ENCODE measurements at regions of chr14 and their contacts with region 1.

Region 1: GRCh38 chr14:30874999-30875787 is 834 bp downstream of the COCH start:
- DNase-seq: no peak

Region 2: GRCh38 chr14:30656190-30656632 is 219.0 kb before region 1 on chr14:
- in situ Hi-C with region 1: loop called (anchors 25 kb)
- DNase-seq: peak; percentile 42

Region 3: DNA sequence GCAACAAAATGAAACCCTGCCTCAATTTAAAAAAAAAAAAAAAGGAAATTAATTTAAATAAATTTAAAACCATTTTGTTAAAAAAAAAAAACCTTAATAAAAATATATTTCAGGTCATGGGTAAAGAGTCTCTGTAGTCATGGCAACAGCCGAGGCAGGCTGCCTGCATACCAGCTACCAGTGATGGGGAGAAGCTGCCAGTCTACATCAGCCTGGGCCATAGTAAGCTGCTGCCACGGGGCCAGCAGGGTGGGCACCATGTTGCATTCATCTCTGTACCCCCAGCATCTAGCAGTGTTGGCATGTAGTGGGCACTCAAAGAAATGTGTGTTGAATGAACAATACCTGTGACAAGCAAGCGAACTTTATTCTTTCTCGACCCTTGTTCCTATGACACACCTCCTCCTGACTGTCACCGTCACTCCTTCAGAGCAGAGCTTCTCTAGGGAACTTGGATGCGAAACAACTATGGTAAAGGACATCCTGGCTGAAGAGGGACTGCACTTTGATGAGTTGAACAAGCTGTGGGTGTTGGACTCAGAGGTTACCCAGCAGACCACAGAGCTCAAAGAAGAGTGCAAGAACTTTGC is 143.0 kb after region 1 on chr14:
- in situ Hi-C with region 1: no loop called
- DNase-seq: no peak

Measured in KBM-7 (cell line).